ENCODE measurements at regions of chr4 and their contacts with region 1.

Region 1: GRCh38 chr4:145234091-145234706 is 53.8 kb upstream of the OTUD4 start:
- DNase-seq: peak in 1 of 2 donors; percentile 16
- ATAC-seq: peak; percentile 66 to 69
- H3K4me3 ChIP-seq: no peak overlapping the region
- H3K27ac ChIP-seq: no peak overlapping the region
- H3K4me1 ChIP-seq: peaks cover 3 to 5% of the 10 kb centered on the region in 2 donors
- H3K27me3 ChIP-seq: no peaks in the 10 kb centered on the region
- CTCF ChIP-seq: peak; percentile 58 to 84 (median 66)
- POLR2A ChIP-seq: no peak

Region 2: GRCh38 chr4:145557720-145558119 is 323.5 kb after region 1 on chr4:
- in situ Hi-C with region 1: loop called in 3 of 4 experiments (anchors 10 to 25 kb)
- intact Hi-C with region 1: loop called (anchors 1 kb)
- DNase-seq: peak in 1 of 2 donors; percentile 52
- ATAC-seq: peak; percentile 42 to 81
- H3K4me3 ChIP-seq: no peak overlapping the region
- H3K27ac ChIP-seq: no peak overlapping the region
- H3K4me1 ChIP-seq: no peaks in the 10 kb centered on the region
- H3K27me3 ChIP-seq: no peaks in the 10 kb centered on the region
- CTCF ChIP-seq: peak; percentile 76 to 88 (median 77)
- POLR2A ChIP-seq: no peak

Region 3: GRCh38 chr4:145609481-145610427 is 375.6 kb after region 1 on chr4:
- in situ Hi-C with region 1: loop called in 3 of 4 experiments (anchors 5 to 10 kb)
- intact Hi-C with region 1: loop called (anchors 2 kb)
- DNase-seq: peak in 1 of 2 donors; percentile 38
- ATAC-seq: peak in 1 of 2 donors; percentile 73
- H3K4me3 ChIP-seq: no peak overlapping the region
- H3K27ac ChIP-seq: peak overlapping the region in 1 of 4 donors; percentile 31
- H3K4me1 ChIP-seq: no peaks in the 10 kb centered on the region
- H3K27me3 ChIP-seq: no peaks in the 10 kb centered on the region
- CTCF ChIP-seq: peak; percentile 47 to 76 (median 62)
- POLR2A ChIP-seq: no peak

Measured in gastrocnemius medialis (tissue), 4 donors.